ENCODE measurements at regions of chr3 and their contacts with region 1.

Region 1: GRCh38 chr3:155079746-155080487 is at the start of gene MME:
- DNase-seq: peak; percentile 71
- H3K4me3 Mint-ChIP-seq: peak within 1 kb of the TSS; percentile 92
- H3K27ac Mint-ChIP-seq: peak within 1 kb of the TSS; percentile 84
- H3K4me1 Mint-ChIP-seq: peaks cover 35% of the 10 kb centered on the region
- H3K27me3 Mint-ChIP-seq: no peaks in the 10 kb centered on the region
- CTCF ChIP-seq: no peak
- total RNA-seq, gene MME: 26.3 and 37.0 TPM in 2 replicates

Region 2: DNA sequence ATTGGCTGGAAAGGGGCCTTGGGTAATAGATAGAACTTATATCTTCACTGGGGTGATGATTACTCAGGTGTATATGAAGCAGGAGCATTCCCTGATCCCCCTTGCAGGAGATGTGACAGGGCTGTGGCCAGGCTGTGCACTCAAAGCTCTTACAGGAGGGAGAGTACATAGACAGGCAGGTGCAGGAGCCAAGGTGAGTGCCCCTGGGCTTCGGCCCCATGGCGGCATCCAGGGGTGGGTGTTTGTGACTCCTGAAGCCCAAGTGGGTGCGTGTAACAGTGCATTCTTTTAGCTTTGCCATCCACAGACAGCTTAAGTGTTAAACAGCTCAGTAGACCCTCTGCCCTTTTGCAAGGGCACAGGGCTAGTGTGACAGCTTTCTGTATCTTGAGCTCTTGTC is 413.4 kb before region 1 on chr3:
- CTCF ChIA-PET with region 1: no interaction called
- POLR2A ChIA-PET with region 1: no interaction called
- intact Hi-C with region 1: no loop called
- DNase-seq: no peak
- H3K4me3 Mint-ChIP-seq: no peak overlapping the region
- H3K27ac Mint-ChIP-seq: no peak overlapping the region
- H3K4me1 Mint-ChIP-seq: no peaks in the 10 kb centered on the region
- H3K27me3 Mint-ChIP-seq: no peaks in the 10 kb centered on the region
- CTCF ChIP-seq: no peak

Region 3: DNA sequence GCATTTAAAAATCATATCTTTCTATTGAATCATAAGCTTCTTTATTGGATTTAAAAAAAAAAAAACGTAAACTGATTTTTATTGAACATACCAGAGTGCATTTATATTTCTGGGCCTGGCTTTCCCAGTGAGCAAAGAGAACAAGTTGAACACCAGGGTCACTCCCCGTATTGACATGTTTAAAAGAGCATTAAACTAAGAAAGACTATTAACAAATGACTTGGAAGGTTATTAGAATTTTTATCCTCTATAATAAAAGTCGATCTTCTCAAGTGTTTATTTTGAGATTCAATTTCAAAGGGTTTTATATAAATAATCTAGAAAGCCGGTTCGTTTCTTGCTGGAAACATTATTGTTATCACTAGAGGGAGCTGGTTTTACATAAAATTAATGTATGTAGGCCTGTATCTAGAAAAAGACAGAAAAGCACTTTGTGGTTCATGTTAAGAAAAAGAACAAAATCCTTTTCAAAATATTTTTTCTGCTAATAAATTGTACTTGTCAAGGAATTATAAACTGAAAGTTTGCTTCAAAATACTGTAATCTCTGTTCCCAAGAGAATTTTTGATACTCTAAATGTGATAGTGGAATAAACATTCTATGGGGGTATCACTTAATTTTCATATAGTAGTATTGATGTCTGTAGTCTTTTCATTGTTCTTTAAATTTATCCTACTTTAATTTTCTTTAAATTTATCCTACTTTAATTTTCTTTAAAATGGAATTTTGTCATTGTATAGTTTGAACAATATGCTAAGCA is 321.6 kb before region 1 on chr3:
- CTCF ChIA-PET with region 1: interaction called, 3 read pairs
- POLR2A ChIA-PET with region 1: no interaction called
- intact Hi-C with region 1: loop called (anchors 1 kb)
- DNase-seq: peak; percentile 37
- H3K4me3 Mint-ChIP-seq: no peak overlapping the region
- H3K27ac Mint-ChIP-seq: no peak overlapping the region
- H3K4me1 Mint-ChIP-seq: peaks cover 5% of the 10 kb centered on the region
- H3K27me3 Mint-ChIP-seq: no peaks in the 10 kb centered on the region
- CTCF ChIP-seq: peak; percentile 40

Region 4: GRCh38 chr3:155065537-155065936 is 14.4 kb before region 1 on chr3:
- CTCF ChIA-PET with region 1: interaction called, 4 read pairs
- POLR2A ChIA-PET with region 1: interaction called, 31 read pairs
- intact Hi-C with region 1: no loop called
- DNase-seq: peak; percentile 87
- H3K4me3 Mint-ChIP-seq: no peak overlapping the region
- H3K27ac Mint-ChIP-seq: peak overlapping the region; percentile 66
- H3K4me1 Mint-ChIP-seq: peaks cover 25% of the 10 kb centered on the region
- H3K27me3 Mint-ChIP-seq: no peaks in the 10 kb centered on the region
- CTCF ChIP-seq: no peak

Region 5: GRCh38 chr3:155131104-155131503 is 51.2 kb after region 1 on chr3:
- CTCF ChIA-PET with region 1: no interaction called
- POLR2A ChIA-PET with region 1: interaction called, 17 read pairs
- intact Hi-C with region 1: no loop called
- DNase-seq: peak; percentile 53
- H3K4me3 Mint-ChIP-seq: no peak overlapping the region
- H3K27ac Mint-ChIP-seq: peak overlapping the region; percentile 2
- H3K4me1 Mint-ChIP-seq: peaks cover 7% of the 10 kb centered on the region
- H3K27me3 Mint-ChIP-seq: no peaks in the 10 kb centered on the region
- CTCF ChIP-seq: no peak